Activated naive CD8-positive, alpha-beta T cell treated with anti-CD3 and anti-CD28 coated beads, Interleukin-2, amount 10 ng/mL, durations not matched to agents 7 days and 5 days (primary cell): ENCODE measurements at regions of chr1 and their contacts with region 1.

Region 1: DNA sequence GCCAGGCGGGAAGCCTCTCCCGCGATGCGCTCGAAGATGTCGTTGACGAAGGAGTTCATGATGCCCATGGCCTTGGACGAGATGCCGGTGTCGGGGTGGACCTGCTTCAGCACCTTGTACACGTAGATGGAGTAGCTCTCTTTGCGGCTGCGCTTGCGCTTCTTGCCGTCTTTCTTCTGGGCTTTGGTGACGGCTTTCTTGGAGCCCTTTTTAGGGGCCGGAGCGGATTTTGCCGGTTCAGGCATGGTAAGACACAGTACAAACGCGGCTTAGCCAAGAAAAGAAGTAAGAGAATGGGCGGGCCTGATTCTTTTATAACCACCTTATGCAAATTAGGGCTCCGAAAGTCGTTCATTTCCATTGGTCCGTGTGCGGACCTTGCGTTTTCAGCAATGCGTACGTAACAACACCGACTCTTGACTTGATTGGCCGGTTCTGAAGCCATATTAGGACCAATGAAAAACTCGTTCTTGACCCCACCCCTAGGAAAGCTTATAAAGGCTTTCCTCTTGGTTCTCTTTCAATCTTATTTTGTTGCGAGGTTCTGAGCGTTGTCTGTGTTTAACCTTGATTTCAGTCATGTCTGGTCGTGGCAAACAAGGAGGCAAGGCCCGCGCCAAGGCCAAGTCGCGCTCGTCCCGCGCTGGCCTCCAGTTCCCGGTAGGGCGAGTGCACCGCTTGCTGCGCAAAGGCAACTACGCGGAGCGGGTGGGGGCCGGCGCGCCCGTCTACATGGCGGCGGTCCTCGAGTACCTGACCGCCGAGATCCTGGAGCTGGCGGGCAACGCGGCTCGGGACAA is 12.8 kb upstream of the BOLA1 start:
- DNase-seq: peak; percentile 88
- ATAC-seq: peak; percentile 59
- H3K4me3 Mint-ChIP-seq: no peak overlapping the region
- H3K27ac Mint-ChIP-seq: no peak overlapping the region
- H3K4me1 Mint-ChIP-seq: peaks cover 16% of the 10 kb centered on the region
- H3K27me3 Mint-ChIP-seq: no peaks in the 10 kb centered on the region

Region 2: DNA sequence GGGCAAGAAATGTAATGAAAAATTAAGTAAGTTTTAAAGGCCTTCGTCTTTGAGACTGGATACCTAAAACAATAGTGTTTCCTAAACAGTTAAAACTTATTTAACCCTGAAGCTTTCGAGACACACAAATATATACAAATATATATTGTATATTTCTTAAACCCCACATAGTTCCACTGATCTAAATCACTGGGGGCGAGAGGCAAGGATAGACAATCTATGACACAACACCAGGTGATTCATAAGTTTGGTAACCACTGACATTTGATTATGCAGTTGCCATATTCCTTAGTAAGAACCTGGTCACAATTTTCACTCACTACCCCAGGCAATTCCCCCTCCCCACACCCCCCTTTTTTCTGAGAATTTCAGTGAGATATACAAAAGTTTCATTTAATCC is 42.5 kb before region 1 on chr1:
- POLR2A ChIA-PET with region 1: interaction called, 466 read pairs
- DNase-seq: no peak
- ATAC-seq: no peak
- H3K4me3 Mint-ChIP-seq: peak overlapping the region; percentile 94
- H3K27ac Mint-ChIP-seq: peak overlapping the region; percentile 97
- H3K4me1 Mint-ChIP-seq: peaks cover 45% of the 10 kb centered on the region
- H3K27me3 Mint-ChIP-seq: no peaks in the 10 kb centered on the region

Region 3: GRCh38 chr1:149927503-149928387 is 41.1 kb after region 1 on chr1 and contains the start of gene SF3B4:
- POLR2A ChIA-PET with region 1: interaction called, 92 read pairs
- DNase-seq: peak; percentile 95
- ATAC-seq: peak; percentile 94
- H3K4me3 Mint-ChIP-seq: peak within 1 kb of the TSS; percentile 99
- H3K27ac Mint-ChIP-seq: peak within 1 kb of the TSS; percentile 98
- H3K4me1 Mint-ChIP-seq: peaks cover 48% of the 10 kb centered on the region
- H3K27me3 Mint-ChIP-seq: no peaks in the 10 kb centered on the region
- total RNA-seq, gene SF3B4: 72.1 to 74.8 TPM

Region 4: DNA sequence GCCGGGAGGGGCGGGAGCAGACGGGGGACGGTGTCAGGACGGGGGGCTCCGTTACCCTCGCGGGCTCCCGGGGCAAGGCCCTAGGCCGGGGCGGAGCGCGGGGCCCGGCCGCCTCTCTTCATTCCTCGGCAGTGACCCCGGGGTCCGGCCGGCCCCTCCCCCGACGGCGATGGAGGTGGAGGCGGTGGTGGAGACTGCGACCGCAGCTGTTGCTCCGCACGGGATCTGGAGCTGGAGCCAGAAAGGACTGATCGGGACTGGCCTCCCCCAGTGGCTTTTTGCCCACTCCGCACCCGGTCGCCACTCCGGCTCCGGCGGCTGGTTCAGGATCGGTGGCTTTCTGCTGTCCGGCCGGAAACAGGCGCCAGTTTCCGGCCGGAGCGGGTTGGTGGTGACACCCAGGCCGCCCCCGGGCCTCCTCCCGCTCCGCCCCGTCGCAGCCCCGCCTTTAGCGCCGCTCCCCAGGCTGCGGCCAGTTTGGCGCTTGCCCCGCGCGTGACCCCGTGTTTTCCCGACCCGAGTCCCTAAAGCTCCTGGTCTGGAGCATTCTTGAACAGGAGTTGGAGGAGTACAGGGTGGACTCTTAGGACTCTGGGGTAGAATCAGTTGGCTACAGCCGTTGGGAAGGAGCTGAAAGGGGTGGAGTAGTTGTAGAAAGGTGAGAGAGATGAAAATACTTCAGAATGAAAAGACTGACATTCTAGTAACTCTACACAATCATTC is 124.0 kb after region 1 on chr1 and contains the start of gene OTUD7B:
- POLR2A ChIA-PET with region 1: interaction called, 28 read pairs
- DNase-seq: peak; percentile 85
- ATAC-seq: peak; percentile 81
- H3K4me3 Mint-ChIP-seq: peak within 1 kb of the TSS; percentile 96
- H3K27ac Mint-ChIP-seq: peak within 1 kb of the TSS; percentile 87
- H3K4me1 Mint-ChIP-seq: peaks cover 23% of the 10 kb centered on the region
- H3K27me3 Mint-ChIP-seq: peaks cover 2% of the 10 kb centered on the region
- total RNA-seq, gene OTUD7B: 12.8 to 13.7 TPM

Region 5: DNA sequence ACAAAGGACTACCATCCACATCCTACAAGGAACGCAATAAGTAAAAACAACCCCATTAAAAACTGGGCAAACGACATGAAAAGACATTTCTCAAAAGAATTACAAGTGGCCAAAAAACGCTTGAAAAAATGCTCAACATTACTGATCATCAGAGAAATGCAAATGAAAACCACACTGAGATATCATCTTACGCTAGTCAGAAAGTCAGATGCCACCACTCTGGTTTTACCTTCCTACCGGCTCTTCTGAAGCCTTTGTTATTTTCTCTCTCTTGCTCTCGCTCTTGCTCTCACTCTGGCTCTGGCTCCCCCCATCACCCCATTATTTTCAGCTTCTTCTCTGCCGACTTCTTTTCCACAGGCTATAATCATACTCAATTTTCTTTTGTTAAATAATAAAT is 219.7 kb after region 1 on chr1:
- POLR2A ChIA-PET with region 1: interaction called, 37 read pairs
- DNase-seq: no peak
- ATAC-seq: peak; percentile 77
- H3K4me3 Mint-ChIP-seq: peak overlapping the region; percentile 75
- H3K27ac Mint-ChIP-seq: peak overlapping the region; percentile 90
- H3K4me1 Mint-ChIP-seq: peaks cover 67% of the 10 kb centered on the region
- H3K27me3 Mint-ChIP-seq: no peaks in the 10 kb centered on the region

Region 6: DNA sequence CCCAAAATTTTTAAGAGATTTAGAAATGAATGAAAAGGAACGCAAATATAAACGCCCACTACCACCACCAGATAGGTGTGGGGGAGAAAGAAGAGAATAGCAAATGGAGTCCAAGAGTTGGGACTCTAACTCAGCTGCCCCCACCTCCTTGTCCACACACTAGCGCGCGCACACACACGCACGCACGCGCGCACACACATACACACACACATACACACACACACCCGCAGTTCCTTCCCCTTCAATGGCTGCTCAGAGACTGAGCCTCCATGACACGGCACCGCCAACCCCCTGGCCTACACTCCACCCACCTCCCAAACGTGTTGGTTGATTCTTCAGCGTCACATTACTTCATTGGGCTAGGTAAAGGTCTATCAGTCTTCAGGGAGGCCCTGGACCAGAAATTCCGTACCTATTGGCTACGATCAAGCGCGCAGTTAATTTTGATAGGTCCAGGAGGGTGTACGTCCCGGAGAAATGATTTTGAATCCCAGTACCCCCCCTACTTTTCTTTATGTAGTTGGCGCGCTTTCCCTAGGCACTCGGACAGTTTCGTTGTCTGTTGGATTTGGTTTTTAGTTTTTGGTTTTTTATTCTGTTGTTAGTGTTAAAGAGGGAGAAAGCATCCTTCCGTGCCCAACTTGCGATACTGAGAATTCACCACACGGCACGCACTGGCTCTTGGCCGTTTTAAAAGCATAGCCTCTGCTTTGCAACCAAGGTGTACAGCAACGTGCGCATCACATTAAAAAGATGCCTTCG is 349.4 kb after region 1 on chr1 and contains the start of gene ANP32E:
- POLR2A ChIA-PET with region 1: interaction called, 30 read pairs
- DNase-seq: peak; percentile 87
- ATAC-seq: peak; percentile 84
- H3K4me3 Mint-ChIP-seq: no peak within 1 kb of the TSS
- H3K27ac Mint-ChIP-seq: peak within 1 kb of the TSS; percentile 97
- H3K4me1 Mint-ChIP-seq: peaks cover 24% of the 10 kb centered on the region
- H3K27me3 Mint-ChIP-seq: peaks cover 3% of the 10 kb centered on the region
- total RNA-seq, gene ANP32E: 113 to 115 TPM